ENCODE measurements at regions of chr1 and their contacts with region 1.

Region 1: GRCh38 chr1:202315576-202316168 is 26.1 kb downstream of the UBE2T start:
- DNase-seq: peak; percentile 80
- H3K4me3 Mint-ChIP-seq: no peak overlapping the region
- H3K27ac Mint-ChIP-seq: no peak overlapping the region
- H3K4me1 Mint-ChIP-seq: peaks cover 9% of the 10 kb centered on the region
- H3K27me3 Mint-ChIP-seq: peaks cover 13% of the 10 kb centered on the region

Region 2: GRCh38 chr1:202184750-202185460 is 130.8 kb before region 1 on chr1:
- CTCF ChIA-PET with region 1: interaction called, 26 read pairs
- POLR2A ChIA-PET with region 1: no interaction called
- DNase-seq: peak; percentile 71
- H3K4me3 Mint-ChIP-seq: no peak overlapping the region
- H3K27ac Mint-ChIP-seq: no peak overlapping the region
- H3K4me1 Mint-ChIP-seq: peaks cover 3% of the 10 kb centered on the region
- H3K27me3 Mint-ChIP-seq: peaks cover 6% of the 10 kb centered on the region

Region 3: DNA sequence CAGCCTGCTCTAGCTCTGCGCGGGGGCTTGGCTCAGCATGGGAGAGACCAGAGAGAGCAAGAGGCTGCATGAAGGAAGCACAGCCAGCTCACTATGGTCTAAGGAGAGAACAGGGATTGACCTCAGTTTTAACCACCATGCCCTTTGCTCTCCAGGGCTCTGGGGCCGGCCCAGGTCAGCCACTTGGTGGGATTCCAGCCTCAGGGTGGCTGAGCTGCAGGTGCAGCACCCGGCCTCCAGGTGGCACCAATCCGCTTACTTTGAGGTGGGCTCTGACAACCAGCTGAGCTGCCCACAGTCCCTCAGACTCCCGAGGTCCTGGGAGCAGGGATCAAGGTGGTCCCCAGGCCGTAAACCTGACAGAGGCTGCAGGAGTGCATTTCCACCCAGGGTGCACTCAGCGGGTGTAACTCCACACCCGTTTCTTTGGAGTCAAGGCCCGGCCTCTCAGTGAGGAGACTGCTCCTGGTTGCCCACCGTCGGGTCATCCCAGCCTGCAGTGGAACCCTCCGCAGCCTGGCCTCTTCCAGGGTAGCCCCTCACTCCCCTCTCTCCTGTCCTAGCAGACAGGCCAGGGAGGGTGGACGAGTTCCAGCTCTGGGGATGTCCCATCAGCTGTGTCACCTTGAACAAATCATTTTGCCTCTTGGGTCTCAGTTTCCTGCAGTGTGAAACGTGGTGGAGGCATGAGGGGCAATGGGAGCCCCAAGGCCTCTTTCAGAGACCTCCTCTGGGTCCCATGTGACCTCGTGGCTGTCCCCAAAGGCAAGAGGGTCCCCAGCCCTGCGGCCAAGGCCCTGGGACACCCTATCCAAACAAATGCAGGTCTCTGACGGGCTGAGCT is 122.7 kb before region 1 on chr1:
- CTCF ChIA-PET with region 1: interaction called, 40 read pairs
- POLR2A ChIA-PET with region 1: no interaction called
- DNase-seq: peak; percentile 44
- H3K4me3 Mint-ChIP-seq: no peak overlapping the region
- H3K27ac Mint-ChIP-seq: no peak overlapping the region
- H3K4me1 Mint-ChIP-seq: no peaks in the 10 kb centered on the region
- H3K27me3 Mint-ChIP-seq: peaks cover 29% of the 10 kb centered on the region

Region 4: DNA sequence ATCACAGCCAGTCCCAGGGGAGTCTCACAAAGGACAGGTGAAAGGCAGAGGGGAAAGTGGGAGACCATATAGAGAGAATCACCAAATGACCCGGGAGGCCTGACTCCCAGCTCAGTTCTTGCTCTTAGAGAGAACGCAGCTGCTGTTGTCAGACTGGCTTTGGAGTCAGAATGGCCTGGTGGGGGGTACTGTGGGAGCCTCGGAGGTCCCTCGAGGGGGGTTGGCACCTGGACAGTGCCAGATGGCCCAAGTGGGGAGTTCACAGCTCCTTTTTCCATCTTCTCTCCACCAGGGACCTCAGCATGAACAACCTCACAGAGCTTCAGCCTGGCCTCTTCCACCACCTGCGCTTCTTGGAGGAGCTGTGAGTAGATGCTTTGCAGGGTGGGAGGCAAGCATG is 90.5 kb before region 1 on chr1:
- CTCF ChIA-PET with region 1: no interaction called
- POLR2A ChIA-PET with region 1: no interaction called
- DNase-seq: no peak
- H3K4me3 Mint-ChIP-seq: no peak overlapping the region
- H3K27ac Mint-ChIP-seq: no peak overlapping the region
- H3K4me1 Mint-ChIP-seq: peaks cover 21% of the 10 kb centered on the region
- H3K27me3 Mint-ChIP-seq: peaks cover 24% of the 10 kb centered on the region

Region 5: DNA sequence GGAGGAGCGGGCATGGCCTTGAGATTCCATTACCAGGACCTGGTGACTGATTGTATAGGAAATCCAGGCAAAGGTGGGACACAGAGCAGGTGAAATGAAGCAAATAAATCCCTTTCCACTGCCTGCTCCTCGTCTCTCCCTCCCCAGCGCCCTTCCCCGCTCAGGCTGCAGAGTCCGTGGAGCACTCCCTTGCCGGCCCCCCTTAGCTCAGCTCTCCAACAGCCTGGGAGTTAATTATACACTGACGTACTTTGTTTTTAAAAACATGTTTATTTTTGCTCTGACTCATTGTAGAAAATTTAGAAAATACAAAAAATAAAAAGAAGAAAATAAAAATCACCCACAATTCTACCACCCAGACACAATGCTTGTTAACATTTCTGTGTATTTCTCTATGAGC is 60.3 kb before region 1 on chr1:
- CTCF ChIA-PET with region 1: no interaction called
- POLR2A ChIA-PET with region 1: no interaction called
- DNase-seq: no peak
- H3K4me3 Mint-ChIP-seq: no peak overlapping the region
- H3K27ac Mint-ChIP-seq: no peak overlapping the region
- H3K4me1 Mint-ChIP-seq: peaks cover 2% of the 10 kb centered on the region
- H3K27me3 Mint-ChIP-seq: peaks cover 28% of the 10 kb centered on the region

Region 6: GRCh38 chr1:202274611-202275010 is 41.1 kb before region 1 on chr1:
- CTCF ChIA-PET with region 1: interaction called, 28 read pairs
- POLR2A ChIA-PET with region 1: no interaction called
- DNase-seq: peak; percentile 58
- H3K4me3 Mint-ChIP-seq: no peak overlapping the region
- H3K27ac Mint-ChIP-seq: no peak overlapping the region
- H3K4me1 Mint-ChIP-seq: no peaks in the 10 kb centered on the region
- H3K27me3 Mint-ChIP-seq: peaks cover 11% of the 10 kb centered on the region

Measured in activated CD4-positive, alpha-beta memory T cell treated with anti-CD3 and anti-CD28 coated beads, Interleukin-2, amount 10 ng/mL, durations not matched to agents 7 days and 5 days (primary cell).